Lower leg skin (tissue), 4 donors: ENCODE measurements at regions of chrX and their contacts with region 1.

Region 1: GRCh38 chrX:26352891-26353430 is 137.0 kb downstream of the MAGEB5 start:
- DNase-seq: no peak
- H3K4me3 ChIP-seq: no peak overlapping the region
- CTCF ChIP-seq: no peak
- POLR2A ChIP-seq: no peak

Region 2: GRCh38 chrX:26286825-26287224 is 66.1 kb before region 1 on chrX:
- intact Hi-C with region 1: loop called (anchors 2 kb)
- DNase-seq: no peak
- H3K4me3 ChIP-seq: no peak overlapping the region
- CTCF ChIP-seq: no peak
- POLR2A ChIP-seq: no peak

Region 3: DNA sequence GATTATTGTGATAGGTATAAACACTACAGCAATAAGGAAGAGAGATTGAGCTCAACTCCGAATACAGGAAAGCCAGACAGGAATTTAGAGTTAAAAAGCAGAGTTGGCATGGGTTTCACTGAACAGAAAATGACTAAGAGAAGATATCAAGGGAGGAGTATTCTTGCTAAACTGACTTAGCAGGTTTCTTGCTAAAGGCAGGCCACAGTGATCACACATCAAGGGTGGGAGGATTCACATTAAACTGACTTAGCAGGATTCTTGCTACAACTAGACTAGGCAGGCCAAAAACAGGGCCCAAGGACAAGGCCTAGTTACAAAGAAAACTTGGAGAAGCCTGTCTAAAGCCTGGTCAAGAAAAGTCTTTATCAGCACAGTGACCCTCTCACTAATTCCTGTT is 58.1 kb after region 1 on chrX:
- intact Hi-C with region 1: no loop called
- DNase-seq: peak in 1 of 2 donors; percentile 12
- H3K4me3 ChIP-seq: no peak overlapping the region
- CTCF ChIP-seq: no peak
- POLR2A ChIP-seq: no peak

Region 4: DNA sequence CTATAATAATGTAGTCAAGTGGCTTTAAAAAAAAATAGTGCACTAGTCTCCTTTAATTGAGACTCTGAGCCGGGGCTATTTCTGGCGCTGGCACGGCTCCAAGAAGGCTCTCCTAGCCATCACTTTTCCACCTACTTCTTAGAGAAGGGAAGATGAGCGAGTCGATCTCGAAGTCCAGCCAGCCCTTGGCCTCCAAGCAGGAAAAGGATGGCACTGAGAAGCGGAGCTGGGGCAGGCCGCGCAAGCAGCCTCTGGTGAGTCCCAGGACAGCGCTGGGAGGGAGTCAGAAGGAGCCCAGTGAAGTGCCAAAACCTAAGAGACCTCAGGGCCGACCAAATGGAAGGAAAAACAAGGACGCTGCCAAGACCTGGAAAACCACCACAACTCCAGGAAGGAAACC is 394.9 kb after region 1 on chrX:
- intact Hi-C with region 1: no loop called
- DNase-seq: no peak
- H3K4me3 ChIP-seq: no peak overlapping the region
- CTCF ChIP-seq: no peak
- POLR2A ChIP-seq: no peak

Region 5: DNA sequence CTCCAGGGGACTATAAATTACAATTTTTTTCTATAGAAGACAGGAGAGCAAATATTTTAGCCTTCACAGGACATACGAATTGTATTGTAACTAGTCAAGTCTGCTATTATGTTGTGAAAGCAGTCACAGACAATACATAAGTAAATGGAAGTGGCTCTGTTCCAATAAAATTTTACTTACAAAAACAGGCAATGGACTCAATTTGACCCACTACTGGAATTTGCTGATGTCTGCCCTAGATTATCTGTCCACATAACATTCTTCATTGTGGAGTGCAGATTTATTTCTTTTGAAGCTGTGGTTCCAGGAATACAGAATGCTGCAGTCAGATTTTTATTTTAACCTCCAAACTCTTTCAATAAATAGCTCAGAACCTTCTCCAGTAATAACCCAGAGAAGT is 779.9 kb after region 1 on chrX:
- intact Hi-C with region 1: no loop called
- DNase-seq: no peak
- H3K4me3 ChIP-seq: no peak overlapping the region
- CTCF ChIP-seq: no peak
- POLR2A ChIP-seq: no peak